H1 (cell line): ENCODE measurements at regions of chr6 and their contacts with region 1.

Region 1: GRCh38 chr6:18503593-18504231 is 116.6 kb downstream of the RNF144B start:
- DNase-seq: peak; percentile 23 to 57
- H3K4me3 ChIP-seq: no peak overlapping the region
- H3K27ac ChIP-seq: no peak overlapping the region
- H3K4me1 ChIP-seq: no peaks in the 10 kb centered on the region
- H3K27me3 ChIP-seq: no peaks in the 10 kb centered on the region
- CTCF ChIP-seq: peak; percentile 57 to 96 (median 95)
- EP300 ChIP-seq: no peak
- POLR2A ChIP-seq: no peak
- RAD21 ChIP-seq: peak; percentile 100

Region 2: DNA sequence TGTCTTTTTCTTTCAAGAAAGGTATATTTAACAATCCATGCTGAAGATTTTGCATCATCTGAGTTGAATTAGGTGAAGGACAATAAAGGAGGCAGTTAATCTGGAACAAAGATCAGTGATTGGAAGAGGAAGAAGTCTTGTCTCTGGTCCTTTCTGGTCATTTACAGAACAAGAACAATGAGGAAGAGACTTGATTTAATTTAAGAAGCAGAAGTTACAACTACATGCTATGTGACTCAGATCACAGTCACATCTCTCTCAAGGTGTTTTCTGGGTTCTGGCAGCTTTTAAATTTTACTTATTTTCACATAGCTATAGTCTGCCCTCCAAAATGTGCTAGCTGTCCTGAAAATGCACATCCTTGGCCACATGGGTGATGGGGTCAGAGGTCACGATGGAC is 185.9 kb before region 1 on chr6:
- CTCF ChIA-PET with region 1: interaction called, 268 read pairs
- POLR2A ChIA-PET with region 1: no interaction called
- DNase-seq: no peak
- H3K4me3 ChIP-seq: no peak overlapping the region
- H3K27ac ChIP-seq: no peak overlapping the region
- H3K4me1 ChIP-seq: no peaks in the 10 kb centered on the region
- H3K27me3 ChIP-seq: no peaks in the 10 kb centered on the region
- CTCF ChIP-seq: no peak
- EP300 ChIP-seq: no peak
- POLR2A ChIP-seq: no peak
- RAD21 ChIP-seq: no peak

Region 3: GRCh38 chr6:18395856-18396197 is 107.9 kb before region 1 on chr6:
- CTCF ChIA-PET with region 1: interaction called, 13 read pairs
- POLR2A ChIA-PET with region 1: no interaction called
- DNase-seq: no peak
- H3K4me3 ChIP-seq: peak overlapping the region in 1 of 4 experiments; percentile 23; a peak in 1 of 8 replicates
- H3K27ac ChIP-seq: no peak overlapping the region; the same call in 1 of the 2 replicates
- H3K4me1 ChIP-seq: peaks cover 3 to 18% (median 10%) of the 10 kb centered on the region in 4 experiments
- H3K27me3 ChIP-seq: no peaks in the 10 kb centered on the region
- CTCF ChIP-seq: no peak
- EP300 ChIP-seq: no peak
- POLR2A ChIP-seq: no peak
- RAD21 ChIP-seq: no peak